Kidney (tissue), 22 donors: ENCODE measurements at regions of chr1 and their contacts with region 1.

Region 1: DNA sequence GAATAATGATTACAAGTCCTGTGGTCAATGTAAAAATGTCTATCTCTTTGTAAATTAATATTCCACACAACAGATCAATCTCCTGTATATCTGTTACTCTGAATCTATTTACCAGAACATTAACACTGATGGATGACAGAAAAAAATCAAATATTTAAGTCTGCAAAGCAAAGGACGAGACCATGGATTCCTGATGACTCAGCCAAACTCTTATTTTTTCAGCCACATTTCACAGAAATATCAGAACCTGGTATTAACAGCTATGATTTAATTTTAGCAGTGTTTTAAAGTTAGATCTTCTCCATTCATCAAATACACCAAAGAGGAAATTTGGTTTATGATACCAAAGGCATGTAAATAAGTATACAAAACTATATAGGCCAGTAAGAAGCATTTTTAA is 46.1 kb downstream of the FAF1 start:
- DNase-seq: no peak
- H3K4me3 ChIP-seq: no peak overlapping the region
- H3K27ac ChIP-seq: no peak overlapping the region
- H3K4me1 ChIP-seq: no peaks in the 10 kb centered on the region
- H3K27me3 ChIP-seq: no peaks in the 10 kb centered on the region
- CTCF ChIP-seq: no peak

Region 2: GRCh38 chr1:50822035-50822776 is 91.7 kb before region 1 on chr1:
- intact Hi-C with region 1: loop called (anchors 5 kb)
- DNase-seq: no peak
- H3K4me3 ChIP-seq: no peak overlapping the region
- H3K27ac ChIP-seq: no peak overlapping the region
- H3K4me1 ChIP-seq: no peaks in the 10 kb centered on the region
- H3K27me3 ChIP-seq: no peaks in the 10 kb centered on the region
- CTCF ChIP-seq: no peak

Region 3: DNA sequence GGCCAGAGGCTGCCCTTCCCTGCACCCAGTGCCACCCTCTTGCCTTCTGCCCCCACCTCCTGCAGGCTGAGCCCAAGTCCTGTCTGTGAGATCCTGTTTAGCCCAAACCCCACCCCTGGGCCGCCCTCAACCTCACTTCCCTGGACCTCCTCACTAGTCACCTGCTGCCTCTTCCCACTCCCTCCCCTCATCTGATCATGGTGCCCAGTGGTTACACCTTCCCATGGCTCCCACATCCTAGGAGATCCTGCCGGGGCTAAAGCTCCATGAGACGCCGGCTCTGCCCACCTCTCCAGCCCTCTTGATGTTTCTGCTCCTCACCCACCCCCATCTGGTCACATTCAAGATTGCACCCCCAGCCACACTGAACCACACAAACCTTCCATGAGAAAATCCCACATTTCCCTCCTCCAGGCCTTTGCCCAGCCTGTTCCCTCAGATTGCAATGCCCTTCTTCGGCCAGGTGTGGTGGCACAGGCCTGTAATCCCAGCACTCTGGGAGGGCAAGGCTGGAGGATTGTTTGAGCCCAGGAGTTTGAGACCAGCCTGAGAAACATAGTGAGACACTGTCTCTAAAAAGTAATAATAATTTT is 399.4 kb after region 1 on chr1:
- intact Hi-C with region 1: no loop called
- DNase-seq: peak in 1 of 5 donors; percentile 44
- H3K4me3 ChIP-seq: no peak overlapping the region
- H3K27ac ChIP-seq: peak overlapping the region in 1 of 2 donors; percentile 87
- H3K4me1 ChIP-seq: peaks cover 0 to 23% (median 17%) of the 10 kb centered on the region in 3 donors
- H3K27me3 ChIP-seq: no peaks in the 10 kb centered on the region
- CTCF ChIP-seq: peak; percentile 13